T-cell (primary cell): ENCODE measurements at regions of chr1 and their contacts with region 1.

Region 1: DNA sequence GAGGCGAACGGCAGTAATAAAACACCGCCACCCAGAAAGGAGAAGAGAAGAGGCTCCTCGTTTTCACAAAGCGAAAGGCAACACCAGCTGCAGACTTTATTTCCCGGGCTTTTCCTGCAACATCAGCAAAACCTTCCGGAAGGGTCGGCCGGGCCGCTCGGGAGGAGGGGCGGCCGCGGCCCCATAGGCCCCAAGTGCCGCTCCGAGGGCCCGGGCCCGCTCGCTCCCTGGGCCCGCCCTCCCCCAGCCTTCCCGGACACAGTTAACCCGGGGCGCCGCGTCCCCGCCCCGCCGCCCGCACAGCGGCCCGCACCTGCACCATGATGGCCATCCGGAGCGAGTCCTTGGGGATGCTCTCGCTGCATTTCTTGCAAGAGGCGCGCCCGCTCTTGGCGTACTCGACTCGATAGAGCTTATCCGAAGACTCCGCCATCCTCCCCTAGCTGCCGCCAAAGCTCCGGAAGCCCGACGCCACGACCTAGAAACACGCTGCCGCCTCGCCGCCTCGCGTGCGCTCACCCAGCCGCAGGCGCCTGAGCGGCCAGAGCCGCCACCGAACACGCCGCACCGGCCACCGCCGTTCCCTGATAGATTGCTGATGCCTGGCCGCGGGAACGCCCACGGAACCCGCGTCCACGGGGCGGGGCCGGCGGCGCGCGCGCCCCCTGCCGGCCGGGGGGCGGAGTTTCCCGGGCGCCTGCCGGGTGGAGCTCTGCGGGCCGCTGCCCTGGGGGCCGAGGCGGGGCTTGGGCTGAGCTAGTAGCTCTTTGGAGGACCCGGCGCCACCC is at the start of gene PARP1:
- DNase-seq: peak; percentile 74 to 93 (median 86)
- ATAC-seq: peak; percentile 87 to 93 (median 88)
- H3K4me3 ChIP-seq: peak within 1 kb of the TSS; percentile 73 to 78
- H3K4me3 Mint-ChIP-seq: peak within 1 kb of the TSS; percentile 87 to 93 (median 89)
- H3K27ac ChIP-seq: peak within 1 kb of the TSS; percentile 67
- H3K27ac Mint-ChIP-seq: peak within 1 kb of the TSS; percentile 91 to 93
- H3K4me1 ChIP-seq: peaks cover 10 to 47% of the 10 kb centered on the region in 2 experiments
- H3K4me1 Mint-ChIP-seq: peaks cover 43 to 50% (median 48%) of the 10 kb centered on the region in 3 donors
- H3K27me3 ChIP-seq: no peaks in the 10 kb centered on the region
- H3K27me3 Mint-ChIP-seq: no peaks in the 10 kb centered on the region
- total RNA-seq, gene PARP1: 79.1 to 133 (median 105) TPM

Region 2: DNA sequence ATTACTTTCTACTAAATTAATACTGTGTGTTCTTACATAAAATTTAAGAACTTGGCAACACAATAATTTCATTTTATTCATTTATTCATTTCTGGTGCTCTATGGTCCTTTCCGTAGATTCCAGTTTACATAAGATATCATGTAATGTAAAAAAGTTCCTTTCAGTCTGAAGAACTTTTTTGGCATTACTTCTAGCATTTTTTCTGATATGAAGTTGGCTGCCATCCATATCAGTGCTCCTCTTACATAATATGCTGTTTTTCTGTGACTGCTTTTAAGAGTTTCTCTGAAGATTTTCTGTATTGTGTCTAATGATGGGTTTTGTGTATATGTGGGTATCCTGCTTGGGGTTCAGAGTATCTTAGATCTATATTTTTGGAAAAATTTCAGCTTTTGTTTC is 133.6 kb before region 1 on chr1:
- CTCF ChIA-PET with region 1: no interaction called
- POLR2A ChIA-PET with region 1: no interaction called
- DNase-seq: no peak
- ATAC-seq: no peak
- H3K4me3 ChIP-seq: no peak overlapping the region
- H3K4me3 Mint-ChIP-seq: no peak overlapping the region
- H3K27ac ChIP-seq: no peak overlapping the region
- H3K27ac Mint-ChIP-seq: no peak overlapping the region
- H3K4me1 ChIP-seq: no peaks in the 10 kb centered on the region
- H3K4me1 Mint-ChIP-seq: no peaks in the 10 kb centered on the region
- H3K27me3 ChIP-seq: no peaks in the 10 kb centered on the region
- H3K27me3 Mint-ChIP-seq: no peaks in the 10 kb centered on the region

Region 3: GRCh38 chr1:226424228-226425003 is 16.7 kb after region 1 on chr1:
- CTCF ChIA-PET with region 1: interaction called, 3 to 40 read pairs
- POLR2A ChIA-PET with region 1: interaction called, 3 to 4 read pairs
- DNase-seq: peak in 1 of 35 experiments; percentile 62
- ATAC-seq: peak; percentile 52 to 64 (median 60)
- H3K4me3 ChIP-seq: no peak overlapping the region
- H3K4me3 Mint-ChIP-seq: no peak overlapping the region
- H3K27ac ChIP-seq: no peak overlapping the region
- H3K27ac Mint-ChIP-seq: no peak overlapping the region
- H3K4me1 ChIP-seq: peaks cover 11 to 51% of the 10 kb centered on the region in 2 experiments
- H3K4me1 Mint-ChIP-seq: peaks cover 24 to 26% (median 25%) of the 10 kb centered on the region in 3 donors
- H3K27me3 ChIP-seq: peaks cover 0 to 5% of the 10 kb centered on the region in 2 experiments
- H3K27me3 Mint-ChIP-seq: peaks cover 0 to 1% of the 10 kb centered on the region in 2 donors

Region 4: GRCh38 chr1:226444901-226445300 is 37.2 kb after region 1 on chr1:
- CTCF ChIA-PET with region 1: interaction called, 4 to 17 read pairs
- POLR2A ChIA-PET with region 1: interaction called in 1 of 2 experiments, 3 read pairs
- DNase-seq: peak; percentile 44 to 86 (median 69)
- ATAC-seq: peak; percentile 99 to 100 (median 100)
- H3K4me3 ChIP-seq: no peak overlapping the region
- H3K4me3 Mint-ChIP-seq: peak overlapping the region in 1 of 3 donors; percentile 49
- H3K27ac ChIP-seq: peak overlapping the region; percentile 28
- H3K27ac Mint-ChIP-seq: peak overlapping the region; percentile 74 to 89
- H3K4me1 ChIP-seq: peaks cover 28 to 30% of the 10 kb centered on the region in 2 experiments
- H3K4me1 Mint-ChIP-seq: peaks cover 33 to 36% (median 35%) of the 10 kb centered on the region in 3 donors
- H3K27me3 ChIP-seq: no peaks in the 10 kb centered on the region
- H3K27me3 Mint-ChIP-seq: no peaks in the 10 kb centered on the region

Region 5: DNA sequence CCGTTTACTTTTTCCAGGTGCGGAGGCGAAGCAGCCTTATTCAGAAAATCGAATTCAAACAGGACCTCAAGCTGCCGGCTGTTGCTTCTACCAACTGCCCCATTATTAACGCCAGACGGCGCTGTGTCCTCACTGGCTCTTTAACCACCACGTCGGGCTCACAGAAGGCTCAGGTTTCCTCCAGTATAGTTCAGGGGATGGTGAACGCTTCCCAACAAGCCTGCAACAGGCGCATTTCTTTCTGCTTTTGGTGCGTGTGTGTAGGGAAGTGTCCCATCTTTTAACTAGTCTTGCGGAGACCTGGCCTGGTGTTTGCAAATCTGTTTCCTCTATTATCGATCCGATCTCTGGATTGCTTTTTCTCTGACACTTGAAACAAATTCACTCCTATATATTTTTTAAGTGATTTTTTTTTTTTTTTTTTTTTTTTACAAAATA is 140.1 kb after region 1 on chr1:
- CTCF ChIA-PET with region 1: interaction called in 1 of 2 experiments, 10 read pairs
- POLR2A ChIA-PET with region 1: no interaction called
- DNase-seq: peak in 33 of 35 experiments; percentile 21 to 77 (median 52)
- ATAC-seq: peak in 3 of 4 experiments; percentile 49 to 66 (median 52)
- H3K4me3 ChIP-seq: peak overlapping the region in 1 of 2 donors; percentile 1
- H3K4me3 Mint-ChIP-seq: peak overlapping the region in 1 of 3 donors; percentile 59
- H3K27ac ChIP-seq: no peak overlapping the region
- H3K27ac Mint-ChIP-seq: no peak overlapping the region
- H3K4me1 ChIP-seq: peaks cover 8 to 28% of the 10 kb centered on the region in 2 experiments
- H3K4me1 Mint-ChIP-seq: peaks cover 16 to 21% (median 18%) of the 10 kb centered on the region in 3 donors
- H3K27me3 ChIP-seq: peaks cover 0 to 45% of the 10 kb centered on the region in 2 experiments
- H3K27me3 Mint-ChIP-seq: peaks cover 31 to 50% of the 10 kb centered on the region in 2 donors